Aorta (tissue), 5 donors: ENCODE measurements at regions of chr5 and their contacts with region 1.

Region 1: GRCh38 chr5:10355071-10355889 is 1.8 kb downstream of the MARCHF6 start:
- DNase-seq: no peak
- ATAC-seq: no peak
- H3K4me3 ChIP-seq: peak overlapping the region; percentile 81 to 88
- H3K27ac ChIP-seq: no peak overlapping the region
- H3K4me1 ChIP-seq: peaks cover 0 to 2% of the 10 kb centered on the region in 2 donors
- H3K27me3 ChIP-seq: no peaks in the 10 kb centered on the region

Region 2: DNA sequence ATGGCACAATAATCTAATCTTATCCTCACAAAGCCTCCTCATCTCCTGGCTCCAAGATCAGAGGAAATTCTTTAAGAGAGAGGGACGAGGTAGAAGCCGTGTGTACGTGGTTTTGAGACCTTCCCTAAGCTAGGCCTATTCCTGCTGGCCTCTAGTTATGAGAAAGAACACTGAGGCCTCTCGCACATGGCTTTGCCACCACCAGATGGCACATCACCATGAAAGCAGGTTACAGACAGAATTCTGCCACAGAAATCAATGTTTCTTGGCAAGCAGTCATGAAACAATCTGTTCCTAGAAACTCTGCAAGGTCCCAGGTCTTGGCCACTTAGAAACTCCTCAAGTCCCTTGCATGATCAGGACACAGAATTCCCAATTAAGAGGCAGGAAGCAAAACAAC is 457.0 kb before region 1 on chr5:
- intact Hi-C with region 1: no loop called
- DNase-seq: no peak
- ATAC-seq: no peak
- H3K4me3 ChIP-seq: no peak overlapping the region
- H3K27ac ChIP-seq: no peak overlapping the region
- H3K4me1 ChIP-seq: no peaks in the 10 kb centered on the region
- H3K27me3 ChIP-seq: no peaks in the 10 kb centered on the region

Region 3: GRCh38 chr5:10018203-10019060 is 336.8 kb before region 1 on chr5:
- intact Hi-C with region 1: no loop called
- DNase-seq: no peak
- ATAC-seq: no peak
- H3K4me3 ChIP-seq: no peak overlapping the region
- H3K27ac ChIP-seq: no peak overlapping the region
- H3K4me1 ChIP-seq: no peaks in the 10 kb centered on the region
- H3K27me3 ChIP-seq: no peaks in the 10 kb centered on the region

Region 4: GRCh38 chr5:10293907-10294662 is 61.2 kb before region 1 on chr5:
- intact Hi-C with region 1: loop called in 1 of 2 experiments (anchors 5 kb)
- DNase-seq: no peak
- ATAC-seq: no peak
- H3K4me3 ChIP-seq: no peak overlapping the region
- H3K27ac ChIP-seq: no peak overlapping the region
- H3K4me1 ChIP-seq: no peaks in the 10 kb centered on the region
- H3K27me3 ChIP-seq: no peaks in the 10 kb centered on the region

Region 5: DNA sequence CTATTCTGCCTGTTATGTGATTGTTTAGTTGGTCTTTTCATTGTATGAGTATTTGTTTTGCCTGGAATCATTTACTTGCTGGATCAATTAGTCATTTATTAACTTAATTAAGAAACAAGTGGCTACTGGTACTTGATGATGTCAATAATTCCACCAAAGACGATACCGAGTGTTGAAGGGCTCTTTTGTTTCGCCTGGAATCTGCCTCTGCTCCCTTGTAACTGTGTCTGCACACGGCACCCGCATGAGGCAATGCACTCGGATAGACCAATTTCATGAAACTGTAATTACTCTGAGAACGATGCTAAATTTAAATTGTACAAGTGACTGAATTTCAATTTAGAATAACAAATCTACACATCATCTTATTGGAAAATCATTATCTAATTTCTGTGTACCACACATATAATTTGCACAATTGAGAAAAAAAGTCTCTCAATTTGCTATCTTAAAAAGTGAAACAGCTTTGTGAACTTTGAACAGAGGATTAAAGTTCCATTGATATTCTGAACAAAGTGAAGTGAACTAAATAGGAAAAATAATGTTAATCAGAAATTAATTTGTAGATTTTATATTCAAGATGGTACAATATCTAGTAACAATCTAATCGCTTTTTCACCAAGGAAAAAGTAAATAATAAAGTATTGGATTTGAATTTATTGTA is 1405.8 kb after region 1 on chr5:
- intact Hi-C with region 1: no loop called
- DNase-seq: no peak
- ATAC-seq: no peak
- H3K4me3 ChIP-seq: no peak overlapping the region
- H3K27ac ChIP-seq: no peak overlapping the region
- H3K4me1 ChIP-seq: no peaks in the 10 kb centered on the region
- H3K27me3 ChIP-seq: no peaks in the 10 kb centered on the region